ENCODE measurements at regions of chr15 and their contacts with region 1.

Region 1: GRCh38 chr15:75684642-75685041 is 28.0 kb downstream of the CSPG4 start:
- DNase-seq: no peak
- H3K4me3 ChIP-seq: no peak overlapping the region
- H3K27ac ChIP-seq: peak overlapping the region in 2 of 4 donors; percentile 38 to 70
- H3K4me1 ChIP-seq: peaks cover 7 to 50% (median 36%) of the 10 kb centered on the region in 4 donors
- H3K27me3 ChIP-seq: no peaks in the 10 kb centered on the region
- CTCF ChIP-seq: no peak
- EP300 ChIP-seq: no peak
- POLR2A ChIP-seq: no peak

Region 2: GRCh38 chr15:75578948-75579920 is 105.4 kb before region 1 on chr15 and contains the start of gene PTPN9:
- intact Hi-C with region 1: loop called (anchors 10 kb)
- DNase-seq: peak; percentile 93
- H3K4me3 ChIP-seq: peak within 1 kb of the TSS; percentile 74 to 94 (median 88)
- H3K27ac ChIP-seq: peak within 1 kb of the TSS; percentile 86 to 93 (median 92)
- H3K4me1 ChIP-seq: peaks cover 17 to 43% (median 37%) of the 10 kb centered on the region in 4 donors
- H3K27me3 ChIP-seq: no peaks in the 10 kb centered on the region
- CTCF ChIP-seq: peak; percentile 26 to 70 (median 44)
- EP300 ChIP-seq: no peak
- POLR2A ChIP-seq: no peak
- total RNA-seq, gene PTPN9: 20.3 to 31.6 (median 27.5) TPM

Region 3: GRCh38 chr15:75639709-75640482 is 44.7 kb before region 1 on chr15 and contains the start of gene IMP3:
- intact Hi-C with region 1: loop called (anchors 5 kb)
- DNase-seq: peak; percentile 99
- H3K4me3 ChIP-seq: peak within 1 kb of the TSS; percentile 86 to 97 (median 89)
- H3K27ac ChIP-seq: peak within 1 kb of the TSS; percentile 87 to 98 (median 94)
- H3K4me1 ChIP-seq: peaks cover 32 to 44% (median 40%) of the 10 kb centered on the region in 4 donors
- H3K27me3 ChIP-seq: no peaks in the 10 kb centered on the region
- CTCF ChIP-seq: peak in 1 of 3 experiments; percentile 20
- EP300 ChIP-seq: no peak
- POLR2A ChIP-seq: peak; percentile 73
- total RNA-seq, gene IMP3: 49.0 to 83.5 (median 62.1) TPM

Region 4: DNA sequence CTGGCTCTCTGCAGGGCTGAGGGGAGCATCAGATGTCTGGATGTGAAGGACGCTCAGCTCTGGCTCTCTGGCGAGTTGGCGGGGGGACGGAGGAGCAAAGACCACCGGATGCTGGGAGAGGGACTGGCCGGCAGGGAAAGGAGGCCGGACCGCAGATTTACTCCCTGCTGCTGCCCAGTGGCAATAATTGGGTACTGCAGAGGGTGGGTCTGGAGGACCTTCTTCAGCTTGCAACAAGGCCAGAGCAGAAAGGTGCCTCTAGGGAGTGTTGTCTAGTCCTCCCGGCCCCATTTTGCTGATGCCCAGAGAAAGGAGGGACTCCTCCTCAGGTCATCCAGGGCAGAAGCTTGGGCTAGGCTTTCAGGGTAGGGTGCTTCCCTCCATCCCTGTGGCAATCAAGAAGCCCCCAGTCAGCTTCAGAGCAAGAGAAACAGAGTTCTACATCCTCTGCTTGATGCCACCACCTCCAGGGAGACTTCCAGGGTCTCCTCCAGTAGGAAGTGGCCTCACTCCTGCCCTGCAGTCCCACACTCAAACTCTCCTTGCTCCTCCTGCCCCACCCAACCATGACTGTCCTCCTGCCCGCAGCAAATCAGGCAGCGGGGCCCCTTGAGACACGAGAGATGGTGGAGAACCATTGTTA is 48.3 kb after region 1 on chr15:
- intact Hi-C with region 1: loop called (anchors 2 kb)
- DNase-seq: no peak
- H3K4me3 ChIP-seq: peak overlapping the region in 1 of 4 donors; percentile 5
- H3K27ac ChIP-seq: peak overlapping the region; percentile 29 to 63 (median 52)
- H3K4me1 ChIP-seq: peaks cover 22 to 46% (median 39%) of the 10 kb centered on the region in 4 donors
- H3K27me3 ChIP-seq: no peaks in the 10 kb centered on the region
- CTCF ChIP-seq: peak; percentile 89 to 98 (median 95)
- EP300 ChIP-seq: no peak
- POLR2A ChIP-seq: no peak

Measured in esophagus muscularis mucosa (tissue), 4 donors.